Common myeloid progenitor, CD34-positive (primary cell): ENCODE measurements at regions of chr11 and their contacts with region 1.

Region 1: DNA sequence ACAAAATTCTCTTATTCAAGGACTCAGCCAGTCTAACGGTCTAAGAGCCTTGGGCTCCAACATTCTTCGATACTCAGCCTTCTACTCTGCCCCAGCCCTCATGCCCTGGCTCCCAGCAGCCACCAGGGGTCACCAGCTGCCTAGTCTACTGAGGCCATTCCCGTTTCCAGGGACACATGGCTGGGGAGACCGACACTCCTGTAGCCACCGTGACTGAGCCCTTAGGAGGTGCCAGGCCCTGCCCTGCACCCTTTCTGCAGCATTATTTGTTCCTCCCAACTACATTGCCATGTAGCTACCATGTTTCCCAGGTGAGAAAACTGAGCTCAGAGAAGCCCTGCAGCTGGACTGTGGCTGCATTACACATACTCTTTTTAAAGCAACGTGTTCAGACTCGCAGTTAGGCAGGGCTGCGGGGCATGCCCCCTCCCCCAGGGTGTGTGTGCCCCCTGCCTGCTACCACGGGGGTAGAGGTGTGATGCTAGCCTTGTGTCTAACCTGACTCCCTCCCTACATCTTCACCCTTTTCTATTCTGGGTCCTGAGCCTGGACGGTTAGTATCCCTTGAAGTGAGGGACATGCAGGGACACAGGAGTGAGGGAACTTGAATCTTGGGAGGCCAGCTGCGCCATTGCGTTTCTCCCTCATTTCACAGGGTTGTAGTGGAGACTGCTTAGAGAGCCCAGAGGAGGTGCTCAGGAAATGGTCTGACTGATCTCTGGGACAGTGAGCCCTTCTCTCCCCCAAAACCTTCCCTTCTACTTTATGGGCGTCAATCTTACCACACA is 17.5 kb downstream of the ATG16L2 start:
- DNase-seq: peak; percentile 62 to 81 (median 79)
- H3K4me3 ChIP-seq: no peak overlapping the region
- H3K27ac ChIP-seq: no peak overlapping the region
- H3K4me1 ChIP-seq: peaks cover 0 to 11% (median 4%) of the 10 kb centered on the region in 4 experiments
- H3K27me3 ChIP-seq: no peaks in the 10 kb centered on the region

Region 2: DNA sequence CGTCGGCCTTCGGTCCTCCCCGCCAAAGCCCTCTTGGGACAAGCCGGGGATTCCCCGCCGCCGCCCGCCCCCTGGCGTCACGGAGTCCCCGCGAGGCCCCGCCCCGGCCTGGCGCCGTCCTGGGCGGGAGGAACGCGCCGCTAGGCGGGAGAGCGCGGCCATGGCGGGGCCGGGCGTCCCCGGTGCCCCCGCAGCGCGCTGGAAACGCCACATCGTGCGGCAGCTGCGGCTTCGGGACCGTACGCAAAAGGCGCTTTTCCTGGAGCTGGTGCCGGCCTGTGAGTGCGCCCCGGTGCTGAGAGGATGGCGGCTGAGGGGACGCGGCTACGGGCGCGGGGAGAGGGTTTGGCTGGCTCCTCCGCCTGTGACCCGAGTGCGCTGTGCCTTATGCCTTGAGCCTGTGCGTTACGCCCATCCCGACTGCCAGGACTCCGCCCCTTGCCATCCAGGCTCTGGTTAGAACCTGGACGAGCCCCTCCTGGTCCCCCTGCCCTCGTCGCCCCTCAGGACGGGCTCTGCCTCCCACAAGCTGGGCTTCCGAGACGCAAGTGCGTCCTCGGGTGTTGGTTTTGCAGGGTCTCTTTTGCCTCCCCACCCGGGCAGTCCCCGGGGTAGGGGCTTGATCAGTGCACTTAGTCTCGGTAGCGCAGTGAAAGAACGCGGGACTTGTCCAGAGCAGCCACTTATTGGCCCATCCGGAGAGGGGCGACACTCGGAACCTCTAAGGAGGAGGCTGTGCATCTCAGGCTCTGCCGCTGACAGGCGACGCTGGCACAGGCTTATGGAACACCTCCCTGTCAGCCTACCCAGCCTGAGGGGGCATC is 17.2 kb before region 1 on chr11 and contains the start of gene ATG16L2:
- CTCF ChIA-PET with region 1: interaction called, 44 read pairs
- POLR2A ChIA-PET with region 1: interaction called, 5 read pairs
- DNase-seq: peak; percentile 85 to 92 (median 89)
- H3K4me3 ChIP-seq: peak within 1 kb of the TSS; percentile 80 to 98 (median 88)
- H3K27ac ChIP-seq: peak within 1 kb of the TSS; percentile 97 to 99
- H3K4me1 ChIP-seq: peaks cover 9 to 64% (median 51%) of the 10 kb centered on the region in 4 experiments
- H3K27me3 ChIP-seq: no peaks in the 10 kb centered on the region

Region 3: GRCh38 chr11:72848846-72849466 is 17.2 kb after region 1 on chr11:
- CTCF ChIA-PET with region 1: interaction called, 14 read pairs
- POLR2A ChIA-PET with region 1: no interaction called
- DNase-seq: peak; percentile 45 to 71 (median 69)
- H3K4me3 ChIP-seq: no peak overlapping the region
- H3K27ac ChIP-seq: no peak overlapping the region
- H3K4me1 ChIP-seq: no peaks in the 10 kb centered on the region
- H3K27me3 ChIP-seq: no peaks in the 10 kb centered on the region

Region 4: GRCh38 chr11:72897506-72897905 is 65.8 kb after region 1 on chr11:
- CTCF ChIA-PET with region 1: no interaction called
- POLR2A ChIA-PET with region 1: no interaction called
- DNase-seq: no peak
- H3K4me3 ChIP-seq: no peak overlapping the region
- H3K27ac ChIP-seq: no peak overlapping the region
- H3K4me1 ChIP-seq: no peaks in the 10 kb centered on the region
- H3K27me3 ChIP-seq: no peaks in the 10 kb centered on the region

Region 5: DNA sequence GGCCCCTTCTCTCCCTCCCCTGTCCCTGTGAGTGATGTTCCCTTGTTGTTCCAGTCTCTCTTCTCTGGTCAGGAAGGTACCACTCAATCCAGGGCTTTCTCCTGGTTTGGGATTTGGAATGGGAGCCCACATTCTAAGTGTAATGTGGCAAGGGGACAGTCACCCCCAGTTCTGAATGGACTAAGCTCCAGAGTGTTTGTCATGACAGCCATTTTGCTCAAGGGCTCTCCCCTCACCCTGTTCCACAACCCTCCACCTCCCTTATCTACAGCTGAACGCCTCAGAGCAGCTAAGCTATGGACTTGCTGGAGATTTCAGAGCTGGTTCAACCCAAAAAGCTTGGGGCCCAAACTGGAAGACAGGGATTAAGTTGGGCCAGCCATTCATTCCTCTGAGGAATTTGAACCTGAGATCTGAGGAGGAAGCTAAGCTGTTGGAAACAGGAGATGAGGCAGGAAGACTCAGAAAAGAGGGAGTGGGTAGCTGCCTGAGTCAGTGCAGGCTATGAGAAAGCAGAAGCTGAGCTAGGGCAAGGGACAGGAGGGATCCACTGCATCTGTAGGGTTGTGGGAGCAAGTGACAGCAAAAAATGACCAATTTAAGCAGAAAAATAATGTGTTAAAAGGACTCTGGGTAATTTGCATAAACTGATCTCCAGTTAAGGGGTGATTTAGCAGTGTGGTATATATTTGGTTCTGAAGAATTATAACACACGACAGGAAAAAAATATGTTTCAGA is 333.3 kb after region 1 on chr11:
- CTCF ChIA-PET with region 1: interaction called, 10 read pairs
- POLR2A ChIA-PET with region 1: no interaction called
- DNase-seq: peak in 2 of 3 donors; percentile 50 to 63
- H3K4me3 ChIP-seq: no peak overlapping the region
- H3K27ac ChIP-seq: no peak overlapping the region
- H3K4me1 ChIP-seq: peaks cover 5 to 44% (median 17%) of the 10 kb centered on the region in 4 experiments
- H3K27me3 ChIP-seq: no peaks in the 10 kb centered on the region